BJ (cell line): ENCODE measurements at regions of chr3 and their contacts with region 1.

Region 1: DNA sequence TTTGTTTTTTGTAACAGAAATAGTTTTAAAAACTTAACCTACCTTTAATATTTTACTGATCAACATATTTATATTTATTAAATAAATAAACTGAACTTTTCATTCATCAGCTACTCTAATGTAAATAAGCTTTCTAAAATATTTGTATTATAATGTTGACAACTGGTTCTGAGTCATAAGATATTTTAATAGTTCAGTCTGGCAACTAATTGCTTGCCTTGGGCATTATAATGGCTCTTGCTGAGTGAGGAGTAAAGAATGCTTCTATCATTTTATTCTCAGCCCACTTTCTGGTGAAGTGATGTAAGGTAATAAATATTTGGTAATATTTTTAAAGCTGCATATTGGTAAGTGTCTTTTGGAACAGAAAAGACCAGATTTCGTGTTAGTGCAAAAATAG is 81.5 kb downstream of the DIPK2A start:
- DNase-seq: peak; percentile 79
- H3K4me3 ChIP-seq: no peak overlapping the region
- H3K27me3 ChIP-seq: no peaks in the 10 kb centered on the region
- CTCF ChIP-seq: no peak

Region 2: GRCh38 chr3:144031938-144032337 is 21.2 kb before region 1 on chr3:
- CTCF ChIA-PET with region 1: no interaction called
- POLR2A ChIA-PET with region 1: interaction called, 15 read pairs
- DNase-seq: no peak
- H3K4me3 ChIP-seq: no peak overlapping the region
- H3K27me3 ChIP-seq: no peaks in the 10 kb centered on the region
- CTCF ChIP-seq: no peak

Region 3: GRCh38 chr3:144175644-144176425 is 122.7 kb after region 1 on chr3:
- CTCF ChIA-PET with region 1: no interaction called
- POLR2A ChIA-PET with region 1: interaction called, 13 read pairs
- DNase-seq: no peak
- H3K4me3 ChIP-seq: no peak overlapping the region
- H3K27me3 ChIP-seq: no peaks in the 10 kb centered on the region
- CTCF ChIP-seq: no peak